Dendritic cell treated with granulocyte-macrophage colony-stimulating factor and Interleukin-4, amounts not matched to agents 40 ng/mL and 50 ng/mL, for 4 days (primary cell): ENCODE measurements at regions of chr1 and their contacts with region 1.

Region 1: DNA sequence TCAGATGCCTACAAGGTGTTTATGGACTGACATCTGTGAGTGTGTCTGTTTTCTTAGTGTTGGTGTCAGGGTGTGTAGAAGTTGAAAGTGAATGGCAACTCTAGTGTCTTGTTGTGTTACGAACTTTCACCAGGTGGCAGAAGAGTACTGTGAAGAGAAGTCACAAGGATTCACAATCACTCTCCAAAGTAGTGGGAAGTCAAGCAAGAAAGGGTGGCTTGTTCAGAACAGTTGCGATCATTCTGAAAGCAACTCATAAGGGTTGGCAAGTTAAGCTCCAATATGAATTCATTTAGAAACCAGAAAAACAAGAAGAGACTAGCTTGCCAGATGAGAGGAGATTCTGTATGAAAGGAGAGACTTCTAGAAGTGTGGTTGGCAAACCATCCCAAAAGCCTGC is 86.1 kb downstream of the FASLG start:
- H3K4me3 Mint-ChIP-seq: no peak overlapping the region
- H3K27ac Mint-ChIP-seq: peak overlapping the region; percentile 37
- H3K4me1 Mint-ChIP-seq: peaks cover 34% of the 10 kb centered on the region
- H3K27me3 Mint-ChIP-seq: peaks cover 47% of the 10 kb centered on the region

Region 2: GRCh38 chr1:172442843-172443565 is 302.0 kb before region 1 on chr1:
- intact Hi-C with region 1: no loop called
- H3K4me3 Mint-ChIP-seq: peak overlapping the region; percentile 87
- H3K27ac Mint-ChIP-seq: peak overlapping the region; percentile 95
- H3K4me1 Mint-ChIP-seq: peaks cover 39% of the 10 kb centered on the region
- H3K27me3 Mint-ChIP-seq: no peaks in the 10 kb centered on the region

Region 3: DNA sequence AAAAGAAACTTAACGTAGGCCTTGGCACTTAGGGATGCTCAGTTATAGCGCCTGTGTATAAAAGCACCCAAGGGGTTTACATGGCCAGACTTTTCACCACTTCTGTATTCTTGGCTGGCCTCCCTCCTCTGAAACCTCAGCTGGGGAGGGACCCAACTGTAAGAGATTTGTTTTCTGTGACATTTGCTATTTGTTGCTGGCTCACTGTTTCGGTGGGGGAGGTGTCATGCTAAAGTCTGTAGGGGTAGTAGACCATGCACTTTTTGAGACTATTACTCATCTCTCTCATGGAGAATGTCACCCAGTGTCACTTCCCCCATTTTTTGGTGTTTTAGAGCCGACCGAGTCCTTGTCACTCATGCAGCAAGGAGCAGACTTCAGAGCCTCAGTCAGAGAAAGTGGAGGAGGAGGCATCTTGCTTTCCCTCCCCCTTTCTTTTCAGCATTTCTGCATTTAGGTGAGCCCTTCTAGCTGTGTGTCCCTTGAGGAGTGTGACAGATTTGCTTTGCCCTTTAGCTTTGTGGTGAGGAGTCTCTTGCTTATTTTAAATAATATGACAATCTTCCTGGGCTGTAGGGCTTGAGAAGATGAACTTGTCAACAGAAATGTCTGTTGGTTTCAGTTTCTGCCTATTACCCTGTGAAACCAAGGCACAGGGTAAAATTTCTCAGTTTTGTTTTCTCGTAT is 74.0 kb after region 1 on chr1:
- intact Hi-C with region 1: loop called (anchors 2 kb)
- H3K4me3 Mint-ChIP-seq: no peak overlapping the region
- H3K27ac Mint-ChIP-seq: peak overlapping the region; percentile 30
- H3K4me1 Mint-ChIP-seq: peaks cover 25% of the 10 kb centered on the region
- H3K27me3 Mint-ChIP-seq: peaks cover 3% of the 10 kb centered on the region

Region 4: DNA sequence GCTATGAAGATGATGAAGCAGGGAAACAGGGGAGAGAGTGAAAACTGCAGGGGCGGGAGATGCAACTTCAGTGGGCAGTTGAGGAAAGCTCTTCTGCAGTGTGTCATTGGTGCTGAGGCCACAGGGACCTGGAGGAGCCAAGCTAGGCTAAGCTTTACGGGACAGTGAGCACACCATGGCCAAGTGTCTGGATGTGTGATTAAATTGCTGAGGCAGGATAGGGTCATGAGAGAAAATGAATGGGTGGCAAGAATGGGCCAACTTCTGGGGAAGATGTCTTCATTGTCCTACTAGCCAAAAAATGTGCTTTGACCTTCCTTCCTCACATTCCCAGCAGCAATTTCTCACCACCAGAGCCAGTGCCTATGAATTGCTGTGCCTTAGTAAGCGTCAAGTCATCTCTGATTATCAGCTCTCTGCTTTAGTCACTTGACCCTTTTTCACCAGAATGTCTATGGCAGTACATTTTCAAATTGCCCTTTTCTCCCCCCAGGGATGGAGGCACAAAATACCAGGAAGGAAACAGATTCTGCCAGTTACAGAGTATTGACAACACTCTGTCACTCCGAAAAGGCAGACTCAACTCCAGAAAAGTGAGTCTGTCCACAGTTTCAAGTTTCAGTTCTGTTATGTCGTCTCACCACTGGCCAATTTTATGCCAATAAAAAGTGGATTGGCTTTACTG is 138.2 kb after region 1 on chr1:
- intact Hi-C with region 1: no loop called
- H3K4me3 Mint-ChIP-seq: no peak overlapping the region
- H3K27ac Mint-ChIP-seq: no peak overlapping the region
- H3K4me1 Mint-ChIP-seq: peaks cover 13% of the 10 kb centered on the region
- H3K27me3 Mint-ChIP-seq: peaks cover 3% of the 10 kb centered on the region

Region 5: DNA sequence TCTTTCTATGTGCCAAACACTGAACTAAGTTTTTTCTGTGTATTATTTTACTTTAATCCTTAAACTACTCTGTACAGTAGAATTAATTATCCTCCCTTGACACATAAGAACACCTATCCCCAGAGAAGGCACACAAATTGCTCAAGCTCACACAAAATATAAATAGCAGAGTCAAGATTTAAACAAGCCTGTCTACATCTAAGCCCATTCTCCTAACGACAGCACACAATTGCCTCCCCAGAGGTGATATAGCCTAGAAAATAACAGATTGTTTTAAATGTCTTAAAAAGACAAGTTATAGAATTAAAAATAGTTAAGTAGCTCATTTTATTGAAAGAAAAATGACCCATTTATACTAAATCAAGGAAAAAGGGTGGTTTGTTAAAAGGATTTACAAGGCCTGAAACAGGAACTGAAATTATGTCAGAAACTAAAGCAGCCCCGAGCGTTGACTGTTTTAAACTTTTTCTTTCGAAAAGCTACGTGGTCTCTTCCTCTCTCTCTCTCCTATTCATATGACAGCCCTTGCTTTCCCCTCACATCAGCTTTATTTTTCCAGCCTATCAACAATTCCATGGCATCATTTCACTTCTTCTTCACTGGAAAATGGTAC is 275.2 kb after region 1 on chr1:
- intact Hi-C with region 1: loop called (anchors 10 kb)
- H3K4me3 Mint-ChIP-seq: peak overlapping the region; percentile 17
- H3K27ac Mint-ChIP-seq: peak overlapping the region; percentile 88
- H3K4me1 Mint-ChIP-seq: peaks cover 49% of the 10 kb centered on the region
- H3K27me3 Mint-ChIP-seq: no peaks in the 10 kb centered on the region

Region 6: GRCh38 chr1:173117108-173117633 is 372.2 kb after region 1 on chr1:
- intact Hi-C with region 1: loop called (anchors 5 kb)
- H3K4me3 Mint-ChIP-seq: no peak overlapping the region
- H3K27ac Mint-ChIP-seq: peak overlapping the region; percentile 73
- H3K4me1 Mint-ChIP-seq: peaks cover 52% of the 10 kb centered on the region
- H3K27me3 Mint-ChIP-seq: no peaks in the 10 kb centered on the region

Region 7: DNA sequence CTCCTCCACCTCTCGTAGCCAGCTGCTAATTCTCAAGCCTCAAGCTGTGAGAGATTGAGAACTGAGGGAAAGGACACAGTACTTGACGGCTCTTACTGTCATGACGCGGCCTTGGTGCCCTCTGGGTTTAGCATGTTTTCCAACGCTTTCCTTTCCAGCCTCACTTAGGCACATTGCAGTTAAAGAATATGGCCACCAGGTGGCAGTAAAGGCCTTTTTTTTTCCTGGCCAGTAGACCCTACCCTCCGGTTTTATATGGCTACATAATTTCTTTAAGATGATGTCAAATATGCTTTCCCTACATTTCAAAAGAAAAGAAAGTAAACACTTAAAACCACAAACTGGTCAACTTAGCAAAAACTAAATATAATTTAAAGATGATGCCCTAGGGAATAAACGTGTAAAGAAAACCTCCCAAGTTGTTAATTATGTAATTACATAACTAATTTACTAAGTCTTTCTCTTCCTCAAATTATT is 675.4 kb after region 1 on chr1:
- intact Hi-C with region 1: loop called (anchors 5 kb)
- H3K4me3 Mint-ChIP-seq: no peak overlapping the region
- H3K27ac Mint-ChIP-seq: no peak overlapping the region
- H3K4me1 Mint-ChIP-seq: peaks cover 62% of the 10 kb centered on the region
- H3K27me3 Mint-ChIP-seq: no peaks in the 10 kb centered on the region

Region 8: DNA sequence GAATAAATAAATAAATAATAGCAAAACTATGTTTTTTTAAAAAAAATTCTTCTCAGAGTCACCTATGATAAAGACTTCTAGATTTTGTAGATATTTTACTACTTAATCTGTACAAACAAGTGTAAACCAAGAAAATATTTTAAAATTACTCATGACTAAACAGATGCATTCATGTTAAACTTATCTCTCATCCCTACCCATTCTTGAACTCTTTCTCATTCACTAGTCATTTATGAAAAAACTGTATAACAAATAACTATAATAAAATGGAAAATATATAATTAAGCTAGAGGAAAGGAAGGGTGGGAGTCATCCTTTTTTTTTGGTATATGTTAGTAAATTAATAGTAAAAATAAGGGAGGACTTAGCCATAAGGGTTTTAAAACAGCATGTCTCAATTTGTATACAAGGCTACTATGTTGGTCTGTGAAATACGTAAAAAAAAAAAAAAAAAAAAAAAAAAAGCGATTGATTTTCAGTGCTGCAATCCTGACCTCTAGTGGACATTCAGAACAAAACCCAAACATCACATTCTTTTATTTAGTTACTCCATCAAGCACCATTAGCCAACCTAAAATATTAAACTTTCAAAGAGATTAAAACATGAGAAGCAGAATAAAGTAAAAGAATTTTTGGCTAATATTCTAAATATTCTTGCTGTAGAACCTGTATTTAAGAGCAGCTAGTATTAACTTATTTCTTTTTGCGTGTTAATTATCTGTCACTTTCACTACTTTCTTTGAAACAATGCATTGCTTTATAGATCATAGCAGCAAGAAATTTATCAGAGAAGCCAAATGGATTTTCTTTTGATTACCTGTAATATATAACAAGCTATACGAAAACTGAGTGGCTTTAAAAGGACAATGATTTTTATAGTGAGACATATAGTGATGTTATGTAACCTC is 1998.9 kb after region 1 on chr1:
- intact Hi-C with region 1: loop called (anchors 10 kb)
- H3K4me3 Mint-ChIP-seq: no peak overlapping the region
- H3K27ac Mint-ChIP-seq: no peak overlapping the region
- H3K4me1 Mint-ChIP-seq: peaks cover 31% of the 10 kb centered on the region
- H3K27me3 Mint-ChIP-seq: no peaks in the 10 kb centered on the region